Left cardiac atrium (tissue), 4 donors: ENCODE measurements at regions of chr15 and their contacts with region 1.

Region 1: GRCh38 chr15:85044251-85044853 is 62.7 kb downstream of the PDE8A start:
- DNase-seq: peak; percentile 57
- ATAC-seq: peak; percentile 67 to 83

Region 2: GRCh38 chr15:84955089-84955848 is 89.1 kb before region 1 on chr15:
- intact Hi-C with region 1: loop called (anchors 1 to 5 kb)
- DNase-seq: peak; percentile 80
- ATAC-seq: peak; percentile 94 to 97

Region 3: DNA sequence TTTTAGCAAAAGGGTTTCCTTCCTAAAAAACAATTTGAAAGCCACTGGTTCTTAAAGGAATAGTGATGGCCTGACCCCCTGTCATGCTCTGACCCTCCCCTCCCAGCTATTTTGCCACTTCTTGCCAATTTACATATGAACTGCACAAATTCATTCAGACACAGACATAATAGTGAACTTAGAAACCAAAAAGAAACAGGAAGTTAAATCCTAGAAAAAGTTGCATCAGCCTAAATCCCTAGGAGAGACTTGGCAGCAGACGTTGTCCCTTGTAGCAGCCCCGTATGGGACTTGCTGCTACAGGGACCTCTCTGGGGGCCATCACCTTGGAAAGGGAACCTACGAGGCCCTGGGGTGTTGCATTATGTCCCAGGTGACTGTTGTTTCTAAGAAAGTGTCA is 77.0 kb before region 1 on chr15:
- intact Hi-C with region 1: no loop called
- DNase-seq: no peak
- ATAC-seq: no peak

Region 4: GRCh38 chr15:84981054-84981710 is 63.2 kb before region 1 on chr15:
- intact Hi-C with region 1: loop called in 1 of 2 experiments (anchors 5 kb)
- DNase-seq: peak; percentile 95
- ATAC-seq: peak; percentile 92 to 94

Region 5: GRCh38 chr15:85094685-85095084 is 50.3 kb after region 1 on chr15:
- intact Hi-C with region 1: loop called in 1 of 2 experiments (anchors 5 kb)
- DNase-seq: no peak
- ATAC-seq: no peak